Natural killer cell (primary cell): ENCODE measurements at regions of chr17 and their contacts with region 1.

Region 1: GRCh38 chr17:68205251-68205807 is 42.5 kb upstream of the AMZ2 start:
- DNase-seq: peak; percentile 96
- ATAC-seq: peak; percentile 75 to 94 (median 86)
- H3K4me3 ChIP-seq: peak overlapping the region; percentile 93
- H3K4me3 Mint-ChIP-seq: peak overlapping the region; percentile 99
- H3K27ac ChIP-seq: peak overlapping the region; percentile 91
- H3K27ac Mint-ChIP-seq: peak overlapping the region; percentile 92 to 95
- H3K4me1 ChIP-seq: peaks cover 31% of the 10 kb centered on the region
- H3K4me1 Mint-ChIP-seq: peaks cover 32 to 38% of the 10 kb centered on the region in 2 donors
- H3K27me3 ChIP-seq: no peaks in the 10 kb centered on the region
- H3K27me3 Mint-ChIP-seq: no peaks in the 10 kb centered on the region
- CTCF ChIP-seq: peak; percentile 84

Region 2: GRCh38 chr17:68172461-68172954 is 32.8 kb before region 1 on chr17:
- intact Hi-C with region 1: loop called (anchors 1 kb)
- DNase-seq: peak; percentile 66 to 88
- ATAC-seq: peak; percentile 77 to 95 (median 87)
- H3K4me3 ChIP-seq: no peak overlapping the region
- H3K4me3 Mint-ChIP-seq: no peak overlapping the region
- H3K27ac ChIP-seq: no peak overlapping the region
- H3K27ac Mint-ChIP-seq: no peak overlapping the region
- H3K4me1 ChIP-seq: peaks cover 20% of the 10 kb centered on the region
- H3K4me1 Mint-ChIP-seq: peaks cover 15 to 20% of the 10 kb centered on the region in 2 donors
- H3K27me3 ChIP-seq: no peaks in the 10 kb centered on the region
- H3K27me3 Mint-ChIP-seq: no peaks in the 10 kb centered on the region
- CTCF ChIP-seq: peak; percentile 98

Region 3: DNA sequence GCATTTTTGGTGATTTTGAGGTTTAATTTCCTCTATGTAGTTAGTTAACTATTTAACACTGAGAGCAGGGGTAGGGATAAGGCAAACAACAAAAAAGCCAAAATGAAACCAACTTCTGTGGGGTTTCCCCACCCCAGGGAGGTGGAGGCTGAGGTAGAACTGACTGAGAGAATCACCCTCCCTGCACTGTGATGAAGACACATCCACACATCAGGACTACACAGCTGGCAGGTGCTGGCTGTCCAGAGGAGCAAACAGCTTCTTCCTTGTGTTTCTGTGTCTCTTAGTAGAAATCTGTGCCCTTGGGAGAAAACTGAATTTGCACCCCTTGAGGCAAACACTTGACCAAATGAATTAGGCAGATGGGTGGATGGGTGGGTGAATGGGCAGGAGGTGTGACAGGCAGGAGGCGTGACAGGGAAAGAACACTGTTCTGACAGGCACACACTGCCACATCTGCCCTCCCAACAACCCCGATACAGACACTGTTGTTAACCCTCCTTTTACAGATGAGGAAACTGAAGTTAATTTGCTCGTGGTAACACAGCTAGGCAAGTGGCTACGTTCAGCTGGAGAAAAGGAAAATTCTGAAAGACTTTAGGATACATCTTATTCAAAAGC is 20.4 kb before region 1 on chr17:
- intact Hi-C with region 1: loop called (anchors 1 kb)
- DNase-seq: peak; percentile 52 to 87
- ATAC-seq: peak; percentile 69 to 88 (median 77)
- H3K4me3 ChIP-seq: no peak overlapping the region
- H3K4me3 Mint-ChIP-seq: peak overlapping the region; percentile 92
- H3K27ac ChIP-seq: peak overlapping the region; percentile 80
- H3K27ac Mint-ChIP-seq: peak overlapping the region; percentile 94 to 95
- H3K4me1 ChIP-seq: peaks cover 56% of the 10 kb centered on the region
- H3K4me1 Mint-ChIP-seq: peaks cover 47 to 56% of the 10 kb centered on the region in 2 donors
- H3K27me3 ChIP-seq: no peaks in the 10 kb centered on the region
- H3K27me3 Mint-ChIP-seq: no peaks in the 10 kb centered on the region
- CTCF ChIP-seq: no peak

Region 4: GRCh38 chr17:68221760-68222159 is 16.4 kb after region 1 on chr17:
- intact Hi-C with region 1: loop called (anchors 2 kb)
- DNase-seq: no peak
- ATAC-seq: peak in 1 of 3 donors; percentile 3
- H3K4me3 ChIP-seq: peak overlapping the region; percentile 66
- H3K4me3 Mint-ChIP-seq: peak overlapping the region; percentile 10
- H3K27ac ChIP-seq: peak overlapping the region; percentile 92
- H3K27ac Mint-ChIP-seq: peak overlapping the region; percentile 100
- H3K4me1 ChIP-seq: peaks cover 62% of the 10 kb centered on the region
- H3K4me1 Mint-ChIP-seq: peaks cover 67 to 70% of the 10 kb centered on the region in 2 donors
- H3K27me3 ChIP-seq: no peaks in the 10 kb centered on the region
- H3K27me3 Mint-ChIP-seq: no peaks in the 10 kb centered on the region
- CTCF ChIP-seq: no peak

Region 5: GRCh38 chr17:68255731-68256538 is 50.6 kb after region 1 on chr17:
- intact Hi-C with region 1: loop called (anchors 5 kb)
- DNase-seq: peak in 1 of 2 donors; percentile 64
- ATAC-seq: peak; percentile 20 to 46 (median 30)
- H3K4me3 ChIP-seq: no peak overlapping the region
- H3K4me3 Mint-ChIP-seq: peak overlapping the region; percentile 93
- H3K27ac ChIP-seq: peak overlapping the region; percentile 98
- H3K27ac Mint-ChIP-seq: peak overlapping the region; percentile 97 to 100
- H3K4me1 ChIP-seq: peaks cover 67% of the 10 kb centered on the region
- H3K4me1 Mint-ChIP-seq: peaks cover 72 to 73% of the 10 kb centered on the region in 2 donors
- H3K27me3 ChIP-seq: no peaks in the 10 kb centered on the region
- H3K27me3 Mint-ChIP-seq: no peaks in the 10 kb centered on the region
- CTCF ChIP-seq: no peak

Region 6: DNA sequence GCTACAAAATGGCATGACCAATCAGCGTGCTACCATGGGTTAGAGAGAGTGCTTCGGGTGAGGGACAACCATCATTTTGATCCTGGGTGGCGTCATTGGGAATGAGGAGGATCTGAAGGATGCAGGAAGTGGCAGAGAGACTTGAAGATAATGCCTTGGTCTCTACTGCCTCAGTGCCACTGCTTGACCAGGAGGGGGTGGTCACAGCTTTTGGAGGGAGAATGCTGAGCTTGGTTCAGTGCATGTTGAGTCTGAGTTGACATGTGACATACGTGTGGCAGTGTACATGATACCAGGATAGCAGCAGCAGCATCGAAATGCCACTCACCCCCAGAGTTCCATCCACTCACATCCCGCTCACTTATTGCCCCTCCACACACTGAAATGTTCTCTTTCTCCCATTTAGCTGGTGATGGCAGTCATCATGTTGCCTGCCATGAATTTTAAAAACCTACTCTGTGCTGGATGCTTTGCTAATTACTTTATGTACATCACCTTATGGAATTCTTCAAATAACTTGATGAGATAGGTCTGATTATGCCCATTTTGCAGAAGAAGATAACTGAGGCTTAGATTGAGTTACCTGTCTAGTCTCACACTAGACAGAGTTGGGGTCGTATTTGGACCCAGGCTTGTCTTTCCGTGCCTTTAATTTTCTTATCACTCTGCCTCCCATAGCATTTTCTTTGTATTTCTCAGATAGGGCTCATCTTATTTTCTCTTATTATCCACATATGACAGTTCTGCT is 122.7 kb after region 1 on chr17:
- intact Hi-C with region 1: no loop called
- DNase-seq: no peak
- ATAC-seq: no peak
- H3K4me3 ChIP-seq: no peak overlapping the region
- H3K4me3 Mint-ChIP-seq: no peak overlapping the region
- H3K27ac ChIP-seq: no peak overlapping the region
- H3K27ac Mint-ChIP-seq: no peak overlapping the region
- H3K4me1 ChIP-seq: peaks cover 11% of the 10 kb centered on the region
- H3K4me1 Mint-ChIP-seq: peaks cover 40 to 44% of the 10 kb centered on the region in 2 donors
- H3K27me3 ChIP-seq: no peaks in the 10 kb centered on the region
- H3K27me3 Mint-ChIP-seq: no peaks in the 10 kb centered on the region
- CTCF ChIP-seq: no peak

Region 7: GRCh38 chr17:68435876-68436842 is 230.8 kb after region 1 on chr17:
- intact Hi-C with region 1: loop called (anchors 5 kb)
- DNase-seq: peak; percentile 78 to 94
- ATAC-seq: peak; percentile 80 to 90 (median 81)
- H3K4me3 ChIP-seq: no peak overlapping the region
- H3K4me3 Mint-ChIP-seq: peak overlapping the region; percentile 87
- H3K27ac ChIP-seq: no peak overlapping the region
- H3K27ac Mint-ChIP-seq: peak overlapping the region; percentile 96
- H3K4me1 ChIP-seq: peaks cover 32% of the 10 kb centered on the region
- H3K4me1 Mint-ChIP-seq: peaks cover 42 to 56% of the 10 kb centered on the region in 2 donors
- H3K27me3 ChIP-seq: no peaks in the 10 kb centered on the region
- H3K27me3 Mint-ChIP-seq: no peaks in the 10 kb centered on the region
- CTCF ChIP-seq: peak; percentile 83

Region 8: DNA sequence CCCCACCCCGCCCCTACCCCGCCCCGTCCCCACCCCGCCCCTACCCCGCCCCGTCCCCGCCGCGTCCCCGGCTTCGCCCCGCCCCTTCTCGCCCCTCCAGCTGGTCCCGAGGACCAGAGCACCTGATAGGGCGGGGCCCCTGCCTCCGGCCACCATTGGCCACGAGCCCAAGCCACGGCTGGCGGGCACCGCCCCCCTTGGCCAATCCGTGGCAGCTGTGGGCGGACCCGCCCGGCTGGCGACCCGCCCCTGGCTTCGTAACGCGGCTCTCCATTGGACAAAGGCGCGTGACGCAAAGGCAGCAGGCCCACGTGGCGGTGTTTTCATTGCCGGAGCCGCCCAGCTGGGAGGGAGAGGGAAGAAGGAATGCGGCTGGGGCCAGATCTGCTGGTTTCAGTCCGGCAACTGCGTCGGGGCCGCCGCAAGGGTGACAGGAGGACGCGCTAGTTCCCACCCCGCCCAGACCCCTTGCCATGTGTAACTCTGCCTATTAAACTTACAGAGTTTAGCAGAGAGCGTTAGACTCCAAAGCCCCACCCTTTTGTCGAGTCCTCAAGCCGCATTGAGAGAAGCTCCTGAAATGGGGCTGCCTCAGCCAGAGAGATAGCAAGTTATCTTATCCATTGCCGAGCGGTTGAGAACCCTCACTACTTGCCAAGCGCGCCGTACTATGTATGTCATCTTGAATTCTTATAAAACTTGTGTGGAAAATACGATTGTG is 252.4 kb after region 1 on chr17:
- intact Hi-C with region 1: no loop called
- DNase-seq: peak; percentile 99
- ATAC-seq: peak; percentile 87 to 99 (median 93)
- H3K4me3 ChIP-seq: peak overlapping the region; percentile 36
- H3K4me3 Mint-ChIP-seq: peak overlapping the region; percentile 83
- H3K27ac ChIP-seq: peak overlapping the region; percentile 78
- H3K27ac Mint-ChIP-seq: peak overlapping the region; percentile 94 to 97
- H3K4me1 ChIP-seq: peaks cover 43% of the 10 kb centered on the region
- H3K4me1 Mint-ChIP-seq: peaks cover 67 to 69% of the 10 kb centered on the region in 2 donors
- H3K27me3 ChIP-seq: no peaks in the 10 kb centered on the region
- H3K27me3 Mint-ChIP-seq: no peaks in the 10 kb centered on the region
- CTCF ChIP-seq: no peak

Region 9: GRCh38 chr17:68640242-68640989 is 435.1 kb after region 1 on chr17:
- intact Hi-C with region 1: no loop called
- DNase-seq: no peak
- ATAC-seq: no peak
- H3K4me3 ChIP-seq: no peak overlapping the region
- H3K4me3 Mint-ChIP-seq: no peak overlapping the region
- H3K27ac ChIP-seq: no peak overlapping the region
- H3K27ac Mint-ChIP-seq: no peak overlapping the region
- H3K4me1 ChIP-seq: no peaks in the 10 kb centered on the region
- H3K4me1 Mint-ChIP-seq: no peaks in the 10 kb centered on the region
- H3K27me3 ChIP-seq: peaks cover 5% of the 10 kb centered on the region
- H3K27me3 Mint-ChIP-seq: peaks cover 23 to 57% of the 10 kb centered on the region in 2 donors
- CTCF ChIP-seq: no peak